ENCODE measurements at regions of chr19 and their contacts with region 1.

Region 1: GRCh38 chr19:51660975-51661600 is 14.5 kb upstream of the SIGLEC14 start:
- DNase-seq: peak; percentile 55
- H3K4me3 ChIP-seq: no peak overlapping the region
- H3K27ac ChIP-seq: no peak overlapping the region
- H3K4me1 ChIP-seq: peaks cover 5% of the 10 kb centered on the region
- H3K27me3 ChIP-seq: no peaks in the 10 kb centered on the region
- CTCF ChIP-seq: peak; percentile 67 to 81

Region 2: DNA sequence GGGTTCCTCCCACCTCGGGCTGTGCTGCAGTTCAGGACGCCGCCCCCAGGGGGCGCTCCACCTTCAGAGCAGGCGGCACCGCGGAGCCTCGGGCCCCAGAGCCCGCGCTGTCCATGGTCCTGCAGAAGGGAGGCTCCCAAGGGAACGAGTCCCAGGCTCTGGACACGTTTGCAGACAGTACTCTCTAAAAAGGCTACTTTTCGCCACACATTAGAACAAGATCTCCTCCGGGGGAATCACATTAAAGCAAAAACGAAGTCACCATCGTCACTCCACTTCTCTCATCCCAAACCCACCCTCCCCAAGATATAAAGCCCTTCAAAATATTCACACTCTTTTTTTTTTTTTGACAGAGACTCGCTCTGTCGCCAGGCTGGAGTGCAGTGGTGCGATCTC is 239.0 kb before region 1 on chr19:
- CTCF ChIA-PET with region 1: interaction called, 7 read pairs
- dilution Hi-C with region 1: no loop called
- in situ Hi-C with region 1: no loop called
- intact Hi-C with region 1: loop called (anchors 1 kb)
- DNase-seq: peak; percentile 63
- H3K4me3 ChIP-seq: no peak overlapping the region
- H3K27ac ChIP-seq: no peak overlapping the region
- H3K4me1 ChIP-seq: no peaks in the 10 kb centered on the region
- H3K27me3 ChIP-seq: peaks cover 2% of the 10 kb centered on the region
- CTCF ChIP-seq: peak; percentile 87 to 99

Region 3: GRCh38 chr19:51607920-51608562 is 53.0 kb before region 1 on chr19:
- CTCF ChIA-PET with region 1: interaction called, 3 read pairs
- dilution Hi-C with region 1: no loop called
- in situ Hi-C with region 1: no loop called
- intact Hi-C with region 1: loop called (anchors 2 kb)
- DNase-seq: peak; percentile 71
- H3K4me3 ChIP-seq: no peak overlapping the region
- H3K27ac ChIP-seq: no peak overlapping the region
- H3K4me1 ChIP-seq: no peaks in the 10 kb centered on the region
- H3K27me3 ChIP-seq: no peaks in the 10 kb centered on the region
- CTCF ChIP-seq: peak; percentile 84 to 91

Region 4: GRCh38 chr19:51783372-51783771 is 122.3 kb after region 1 on chr19:
- CTCF ChIA-PET with region 1: interaction called, 5 read pairs
- dilution Hi-C with region 1: no loop called
- in situ Hi-C with region 1: no loop called
- intact Hi-C with region 1: loop called (anchors 2 kb)
- DNase-seq: peak; percentile 78
- H3K4me3 ChIP-seq: no peak overlapping the region
- H3K27ac ChIP-seq: no peak overlapping the region
- H3K4me1 ChIP-seq: peaks cover 12% of the 10 kb centered on the region
- H3K27me3 ChIP-seq: no peaks in the 10 kb centered on the region
- CTCF ChIP-seq: peak; percentile 44 to 60

Measured in mammary epithelial cell (primary cell).